H1 (cell line): ENCODE measurements at regions of chr16 and their contacts with region 1.

Region 1: DNA sequence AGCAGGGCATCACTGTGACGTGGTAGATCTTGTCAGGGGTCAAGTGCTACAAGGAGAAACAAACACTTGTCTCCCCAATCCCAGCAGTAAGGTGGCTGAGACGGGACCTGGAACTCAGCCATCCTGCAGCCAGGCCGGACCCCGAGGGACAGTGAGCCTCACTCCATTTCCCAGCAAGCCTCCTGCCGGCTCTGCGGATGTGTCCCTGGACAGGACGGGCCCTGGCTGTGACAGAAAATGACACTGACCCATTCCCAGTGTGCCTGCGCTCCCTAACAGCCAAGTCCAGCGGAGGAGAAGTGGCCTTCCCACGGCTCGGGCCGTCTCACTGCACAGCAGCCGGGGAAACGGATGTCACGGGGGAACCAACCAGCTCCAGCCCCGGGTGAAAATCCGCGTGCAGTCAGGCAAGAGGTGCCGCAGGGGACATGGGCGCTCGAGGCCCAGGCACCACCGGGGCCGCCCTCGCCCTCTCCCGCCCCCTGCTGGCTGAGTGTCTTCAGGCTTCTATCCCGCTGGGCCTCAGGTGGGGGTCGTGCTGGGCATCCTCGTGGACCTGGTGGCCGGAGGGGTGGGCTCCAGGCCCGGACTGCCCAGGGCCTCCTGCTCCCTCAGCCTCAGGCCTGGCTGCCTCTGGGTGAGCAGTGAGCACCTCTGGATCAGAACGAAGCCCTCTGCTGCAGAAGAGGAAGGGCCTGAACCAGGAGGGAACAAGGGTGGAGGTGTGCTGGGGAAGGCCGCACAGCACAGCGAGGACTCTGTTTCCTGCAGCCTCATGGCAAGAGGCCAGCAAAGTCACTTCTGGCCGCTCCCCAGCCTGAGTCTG is 6.7 kb downstream of the HAGHL start:
- DNase-seq: peak in 1 of 2 experiments; percentile 84
- H3K4me3 ChIP-seq: no peak overlapping the region
- H3K27ac ChIP-seq: no peak overlapping the region
- H3K4me1 ChIP-seq: peaks cover 0 to 2% (median 0%) of the 10 kb centered on the region in 4 experiments; a peak in 2 of 7 replicates
- H3K27me3 ChIP-seq: no peaks in the 10 kb centered on the region
- CTCF ChIP-seq: peak in 2 of 3 experiments; percentile 65 to 68; a peak in 3 of 4 replicates
- EP300 ChIP-seq: no peak
- POLR2A ChIP-seq: no peak
- RAD21 ChIP-seq: peak; percentile 25 to 37; a peak in 3 of 4 replicates

Region 2: GRCh38 chr16:749001-749400 is 15.4 kb after region 1 on chr16:
- CTCF ChIA-PET with region 1: interaction called, 977 read pairs
- POLR2A ChIA-PET with region 1: interaction called, 5 read pairs
- DNase-seq: no peak
- H3K4me3 ChIP-seq: no peak overlapping the region
- H3K27ac ChIP-seq: no peak overlapping the region
- H3K4me1 ChIP-seq: peaks cover 3 to 12% (median 5%) of the 10 kb centered on the region in 4 experiments; a peak in 5 of 7 replicates
- H3K27me3 ChIP-seq: no peaks in the 10 kb centered on the region
- CTCF ChIP-seq: no peak
- EP300 ChIP-seq: no peak
- POLR2A ChIP-seq: no peak
- RAD21 ChIP-seq: no peak

Region 3: GRCh38 chr16:760545-761343 is 27.1 kb after region 1 on chr16 and contains the start of gene MSLN:
- CTCF ChIA-PET with region 1: interaction called, 14 read pairs
- POLR2A ChIA-PET with region 1: no interaction called
- DNase-seq: no peak
- H3K4me3 ChIP-seq: no peak within 1 kb of the TSS
- H3K27ac ChIP-seq: no peak within 1 kb of the TSS
- H3K4me1 ChIP-seq: peaks cover 0 to 2% (median 0%) of the 10 kb centered on the region in 4 experiments; a peak in 1 of 7 replicates
- H3K27me3 ChIP-seq: no peaks in the 10 kb centered on the region
- CTCF ChIP-seq: no peak
- EP300 ChIP-seq: no peak
- POLR2A ChIP-seq: no peak
- RAD21 ChIP-seq: no peak
- total RNA-seq, gene MSLN: 0.28 TPM in 1 of 2 replicates, not detected in the other